GM18951 (cell line): ENCODE measurements at regions of chr1 and their contacts with region 1.

Region 1: GRCh38 chr1:66242646-66243547 is 291.1 kb upstream of the SGIP1 start:
- POLR2A ChIP-seq: no peak

Region 2: GRCh38 chr1:65717815-65718454 is 525.0 kb before region 1 on chr1:
- in situ Hi-C with region 1: loop called (anchors 25 kb)
- POLR2A ChIP-seq: no peak

Region 3: DNA sequence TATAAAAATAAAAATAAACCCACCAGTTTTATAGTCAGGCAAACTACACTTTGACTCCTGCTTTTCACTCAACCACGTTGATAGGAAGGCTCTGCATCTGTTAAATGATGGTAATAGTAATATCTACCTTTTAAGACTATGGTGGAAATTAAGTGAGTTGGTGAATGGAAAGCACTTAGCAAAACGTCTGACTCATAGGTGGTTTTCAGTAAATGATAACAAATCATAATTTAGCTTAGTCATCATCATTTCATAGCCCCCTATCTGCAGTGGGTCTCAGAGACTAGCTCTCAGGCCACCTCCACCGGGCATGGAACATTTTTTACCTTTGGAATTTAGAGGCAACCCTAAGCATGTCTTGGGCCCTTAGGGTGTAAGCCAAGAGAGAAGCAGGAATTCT is 290.2 kb before region 1 on chr1:
- in situ Hi-C with region 1: loop called (anchors 5 kb)
- POLR2A ChIP-seq: no peak

Region 4: GRCh38 chr1:66478116-66478515 is 235.2 kb after region 1 on chr1:
- in situ Hi-C with region 1: no loop called
- POLR2A ChIP-seq: no peak